ENCODE measurements at regions of chr7 and their contacts with region 1.

Region 1: GRCh38 chr7:28408960-28409715 is 3.2 kb upstream of the CREB5 start:
- DNase-seq: peak; percentile 94
- H3K4me3 ChIP-seq: peak overlapping the region; percentile 51 to 77 (median 55)
- H3K27ac ChIP-seq: peak overlapping the region; percentile 61
- H3K4me1 ChIP-seq: peaks cover 42% of the 10 kb centered on the region
- H3K27me3 ChIP-seq: peaks cover 5% of the 10 kb centered on the region
- CTCF ChIP-seq: no peak

Region 2: DNA sequence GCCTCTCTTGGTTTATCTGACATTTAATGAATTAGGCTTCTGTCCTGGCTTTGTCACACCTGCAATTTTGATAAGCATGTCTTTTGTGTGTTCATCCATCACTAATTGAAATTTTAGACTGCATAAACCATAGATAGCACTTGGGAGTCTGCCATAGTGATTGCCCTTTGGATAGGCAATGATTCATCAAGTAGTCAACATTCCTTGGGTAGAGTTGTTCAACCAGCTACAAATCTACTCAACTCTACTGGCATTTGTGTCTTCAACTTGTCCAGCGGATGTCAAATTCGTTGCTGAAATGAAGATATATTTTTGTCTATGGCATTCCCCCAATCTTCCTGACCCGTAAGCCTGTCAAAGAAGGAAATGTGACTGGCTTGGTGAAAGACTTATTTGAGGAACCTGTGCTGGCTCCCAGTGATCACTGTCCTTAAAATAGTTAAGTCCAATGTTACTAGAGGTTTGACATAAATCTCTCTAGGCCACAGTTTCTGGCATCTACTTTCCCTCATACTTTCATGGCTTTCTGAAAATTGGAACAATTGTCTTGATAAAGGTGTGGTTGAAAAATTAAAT is 30.5 kb before region 1 on chr7:
- CTCF ChIA-PET with region 1: no interaction called
- dilution Hi-C with region 1: no loop called
- in situ Hi-C with region 1: no loop called
- intact Hi-C with region 1: no loop called
- DNase-seq: peak; percentile 44
- H3K4me3 ChIP-seq: no peak overlapping the region
- H3K27ac ChIP-seq: no peak overlapping the region
- H3K4me1 ChIP-seq: no peaks in the 10 kb centered on the region
- H3K27me3 ChIP-seq: peaks cover 1% of the 10 kb centered on the region
- CTCF ChIP-seq: no peak

Region 3: GRCh38 chr7:28389504-28390395 is 19.4 kb before region 1 on chr7:
- CTCF ChIA-PET with region 1: interaction called, 11 read pairs
- dilution Hi-C with region 1: no loop called
- in situ Hi-C with region 1: no loop called
- intact Hi-C with region 1: loop called (anchors 1 kb)
- DNase-seq: peak; percentile 58
- H3K4me3 ChIP-seq: peak overlapping the region; percentile 26 to 58 (median 30)
- H3K27ac ChIP-seq: no peak overlapping the region
- H3K4me1 ChIP-seq: peaks cover 9% of the 10 kb centered on the region
- H3K27me3 ChIP-seq: no peaks in the 10 kb centered on the region
- CTCF ChIP-seq: peak; percentile 58 to 65

Region 4: DNA sequence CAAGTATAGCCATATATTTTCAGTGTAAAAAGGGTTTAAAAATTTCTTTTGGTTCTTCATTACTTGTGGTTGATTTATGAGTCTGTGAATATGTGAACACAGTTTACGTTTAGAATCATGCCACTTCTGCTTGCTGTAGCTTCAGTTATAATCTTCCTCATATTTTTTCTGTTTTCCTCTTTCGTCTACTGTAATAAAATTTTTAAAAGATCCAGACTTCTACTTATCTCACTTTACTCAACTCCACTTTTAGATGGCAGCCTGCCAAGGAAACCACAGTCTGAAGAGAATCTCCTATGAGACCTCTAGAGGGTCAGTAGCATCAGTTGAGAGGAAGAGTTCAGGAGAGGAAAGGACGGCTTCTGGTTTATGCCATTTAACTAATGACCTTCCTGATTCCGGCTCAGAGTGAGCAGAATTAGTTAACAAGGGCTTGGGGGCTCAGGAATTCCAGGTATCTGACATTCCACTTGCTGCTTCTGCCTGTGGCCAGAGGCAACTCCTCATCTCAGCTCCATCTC is 24.6 kb after region 1 on chr7:
- CTCF ChIA-PET with region 1: no interaction called
- dilution Hi-C with region 1: no loop called
- in situ Hi-C with region 1: no loop called
- intact Hi-C with region 1: no loop called
- DNase-seq: no peak
- H3K4me3 ChIP-seq: no peak overlapping the region
- H3K27ac ChIP-seq: no peak overlapping the region
- H3K4me1 ChIP-seq: no peaks in the 10 kb centered on the region
- H3K27me3 ChIP-seq: peaks cover 19% of the 10 kb centered on the region
- CTCF ChIP-seq: no peak

Region 5: DNA sequence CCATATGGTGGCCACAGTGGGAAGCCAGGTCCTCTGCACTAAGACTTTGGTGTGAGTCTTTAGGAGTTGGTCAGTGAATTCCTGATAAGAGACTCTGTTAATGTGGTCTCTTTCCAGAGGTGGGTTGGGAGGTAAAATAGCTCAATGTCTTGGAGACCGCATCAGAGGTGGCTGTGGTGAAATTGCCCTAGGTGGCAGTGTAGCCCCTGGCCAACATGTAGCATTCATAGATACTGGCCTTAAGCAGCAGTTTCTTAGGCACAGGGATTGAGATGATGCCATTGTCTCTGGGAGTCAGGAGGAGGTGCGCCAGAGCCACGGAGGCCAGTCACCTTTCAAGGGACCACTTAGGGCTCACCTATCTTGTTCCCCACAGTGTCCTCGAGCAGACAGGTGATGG is 206.0 kb after region 1 on chr7:
- CTCF ChIA-PET with region 1: no interaction called
- dilution Hi-C with region 1: no loop called
- in situ Hi-C with region 1: no loop called
- intact Hi-C with region 1: loop called (anchors 1 kb)
- DNase-seq: no peak
- H3K4me3 ChIP-seq: no peak overlapping the region
- H3K27ac ChIP-seq: no peak overlapping the region
- H3K4me1 ChIP-seq: peaks cover 20% of the 10 kb centered on the region
- H3K27me3 ChIP-seq: no peaks in the 10 kb centered on the region
- CTCF ChIP-seq: no peak

Region 6: DNA sequence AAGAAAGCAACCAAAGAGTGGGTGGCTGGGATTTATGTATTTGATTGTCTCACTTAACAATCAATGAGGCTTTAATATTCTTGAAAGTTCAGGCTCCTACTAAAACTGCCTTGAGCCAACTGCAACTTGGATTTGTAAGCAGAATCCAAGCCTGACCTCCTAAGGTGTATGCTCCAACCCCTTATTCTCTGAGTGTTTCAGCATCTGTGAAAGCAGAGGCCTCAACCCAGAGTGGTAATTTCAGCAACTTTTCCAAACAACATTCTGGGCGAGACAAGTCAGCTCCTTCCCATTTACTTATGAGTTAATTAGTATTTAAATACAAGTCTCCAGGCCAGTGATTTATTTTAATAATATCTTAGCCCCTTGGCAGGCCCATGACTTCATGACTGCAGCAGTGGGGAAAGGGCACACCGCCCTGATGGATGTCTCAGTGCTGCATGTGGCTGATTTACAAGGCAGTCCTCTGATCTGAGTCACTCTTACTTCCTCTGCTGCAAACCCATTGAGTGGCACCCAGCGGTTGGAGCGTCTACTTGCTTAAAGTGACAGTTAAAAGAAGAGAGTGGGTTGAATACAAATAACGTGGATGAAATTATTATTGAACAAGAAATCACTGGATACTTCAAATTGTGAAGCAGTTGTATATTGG is 339.9 kb after region 1 on chr7:
- CTCF ChIA-PET with region 1: no interaction called
- dilution Hi-C with region 1: no loop called
- in situ Hi-C with region 1: no loop called
- intact Hi-C with region 1: loop called (anchors 5 kb)
- DNase-seq: peak; percentile 82
- H3K4me3 ChIP-seq: no peak overlapping the region
- H3K27ac ChIP-seq: no peak overlapping the region
- H3K4me1 ChIP-seq: peaks cover 23% of the 10 kb centered on the region
- H3K27me3 ChIP-seq: no peaks in the 10 kb centered on the region
- CTCF ChIP-seq: peak; percentile 5 to 39

Region 7: DNA sequence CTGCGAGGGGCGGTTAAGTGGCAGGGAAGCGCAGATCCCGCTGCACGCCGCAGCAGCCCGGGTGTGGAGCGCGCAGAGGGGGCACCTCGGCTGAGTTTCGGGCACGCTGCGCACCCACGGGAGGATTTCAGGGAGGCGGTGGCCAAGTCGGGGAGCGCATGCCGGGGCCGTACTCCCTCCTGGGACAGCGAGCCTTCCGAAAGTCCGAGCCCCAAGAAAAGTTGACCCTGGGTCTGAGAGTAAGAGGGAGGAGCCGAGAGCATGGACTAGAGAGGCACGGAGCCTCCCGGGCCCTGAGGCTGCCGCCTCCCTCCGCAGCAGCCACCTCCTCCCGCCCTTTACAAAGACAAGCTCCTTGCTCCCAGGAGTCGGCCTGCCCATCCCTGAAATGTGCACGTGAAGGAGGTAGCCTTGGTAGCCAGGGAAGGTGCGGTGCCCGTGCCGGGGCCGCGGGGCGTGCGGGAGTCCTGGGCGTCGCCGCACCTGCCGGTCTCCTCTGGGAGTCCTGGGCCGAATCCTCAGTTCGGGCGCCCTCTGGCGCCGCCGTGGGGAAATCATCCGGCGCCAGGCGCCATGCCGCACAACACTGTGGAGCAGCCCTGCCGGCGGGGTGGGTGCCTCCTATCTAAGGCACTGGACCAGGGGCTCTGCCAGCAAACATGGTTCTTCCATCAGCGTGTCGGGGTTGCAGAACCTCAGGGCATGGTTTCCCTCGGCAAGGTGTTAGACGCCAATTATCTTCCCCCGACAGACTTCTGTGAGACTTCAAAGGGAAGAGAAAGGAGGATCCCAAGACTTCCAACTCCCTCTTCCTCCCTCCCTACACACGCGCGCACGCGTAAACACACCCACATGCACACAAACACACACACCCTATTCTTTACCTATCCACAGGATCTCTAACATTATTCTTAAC is 445.0 kb after region 1 on chr7:
- CTCF ChIA-PET with region 1: no interaction called
- dilution Hi-C with region 1: no loop called
- in situ Hi-C with region 1: no loop called
- intact Hi-C with region 1: loop called (anchors 5 kb)
- DNase-seq: peak; percentile 69
- H3K4me3 ChIP-seq: peak overlapping the region; percentile 41 to 65 (median 58)
- H3K27ac ChIP-seq: no peak overlapping the region
- H3K4me1 ChIP-seq: peaks cover 35% of the 10 kb centered on the region
- H3K27me3 ChIP-seq: no peaks in the 10 kb centered on the region
- CTCF ChIP-seq: peak; percentile 61 to 93

Region 8: DNA sequence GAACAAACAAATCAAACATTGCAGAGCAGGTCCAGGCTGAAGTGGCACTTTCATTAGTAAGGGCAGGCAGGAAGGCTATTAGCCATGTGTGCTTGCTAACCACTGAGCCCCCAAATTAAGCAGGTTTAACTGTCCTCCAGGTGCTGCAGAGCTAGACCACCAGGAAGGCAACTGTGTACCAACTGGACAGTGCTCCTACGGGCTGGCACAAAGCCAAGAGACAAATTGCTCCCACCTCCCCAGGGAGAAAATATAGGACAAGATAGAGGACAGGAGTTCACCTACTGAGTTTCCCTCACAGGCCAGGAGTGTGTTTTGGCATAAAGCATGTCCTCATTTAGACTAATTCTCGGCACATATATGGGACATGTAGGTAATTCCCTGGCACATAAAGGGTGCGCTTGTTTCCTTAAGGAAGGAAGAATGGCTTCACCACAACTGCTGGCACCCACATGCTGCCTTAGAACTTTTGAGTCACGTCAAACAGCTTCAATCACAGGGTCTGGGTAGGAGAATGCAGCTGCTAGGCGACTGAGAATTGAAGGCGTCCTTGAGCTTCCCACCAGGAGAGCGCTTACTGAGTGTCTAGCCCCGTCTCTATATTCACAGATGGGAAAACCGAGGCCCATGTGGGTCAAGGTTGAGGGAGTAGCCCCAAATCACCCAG is 931.4 kb after region 1 on chr7:
- CTCF ChIA-PET with region 1: no interaction called
- dilution Hi-C with region 1: no loop called
- in situ Hi-C with region 1: no loop called
- intact Hi-C with region 1: loop called (anchors 2 kb)
- DNase-seq: no peak
- H3K4me3 ChIP-seq: no peak overlapping the region
- H3K27ac ChIP-seq: no peak overlapping the region
- H3K4me1 ChIP-seq: peaks cover 31% of the 10 kb centered on the region
- H3K27me3 ChIP-seq: peaks cover 2% of the 10 kb centered on the region
- CTCF ChIP-seq: no peak

Measured in mammary epithelial cell (primary cell).